ENCODE measurements at regions of chr10 and their contacts with region 1.

Region 1: GRCh38 chr10:22003079-22003913 is at the start of gene DNAJC1:
- DNase-seq: peak; percentile 99
- ATAC-seq: peak; percentile 94
- H3K4me3 Mint-ChIP-seq: peak within 1 kb of the TSS; percentile 98
- H3K27ac Mint-ChIP-seq: peak within 1 kb of the TSS; percentile 97
- H3K4me1 Mint-ChIP-seq: peaks cover 27% of the 10 kb centered on the region
- H3K27me3 Mint-ChIP-seq: peaks cover 12% of the 10 kb centered on the region
- total RNA-seq, gene DNAJC1: 22.3 to 23.0 TPM

Region 2: DNA sequence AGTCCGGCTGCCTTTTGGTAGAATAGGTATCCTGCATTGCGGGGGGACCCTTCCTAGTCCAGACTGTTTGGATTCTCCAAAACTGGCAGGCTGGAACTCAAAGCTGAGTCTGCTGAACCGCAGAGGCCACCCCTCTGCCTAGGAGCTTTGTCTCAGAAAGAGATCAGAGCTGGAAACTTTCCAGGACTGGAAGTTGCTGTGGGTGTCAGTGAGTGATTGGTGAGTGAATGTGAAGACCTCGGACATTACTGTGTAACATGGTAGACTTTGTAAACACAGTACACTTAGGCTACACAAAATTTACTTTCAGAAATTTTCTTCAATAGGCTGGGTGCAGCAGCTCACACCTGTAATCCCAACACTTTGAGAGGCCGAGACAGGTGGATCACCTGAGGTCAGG is 103.6 kb before region 1 on chr10:
- POLR2A ChIA-PET with region 1: no interaction called
- DNase-seq: no peak
- ATAC-seq: no peak
- H3K4me3 Mint-ChIP-seq: no peak overlapping the region
- H3K27ac Mint-ChIP-seq: no peak overlapping the region
- H3K4me1 Mint-ChIP-seq: peaks cover 1% of the 10 kb centered on the region
- H3K27me3 Mint-ChIP-seq: no peaks in the 10 kb centered on the region

Region 3: GRCh38 chr10:21943633-21944265 is 59.5 kb before region 1 on chr10:
- POLR2A ChIA-PET with region 1: no interaction called
- DNase-seq: no peak
- ATAC-seq: no peak
- H3K4me3 Mint-ChIP-seq: no peak overlapping the region
- H3K27ac Mint-ChIP-seq: no peak overlapping the region
- H3K4me1 Mint-ChIP-seq: peaks cover 6% of the 10 kb centered on the region
- H3K27me3 Mint-ChIP-seq: no peaks in the 10 kb centered on the region

Region 4: GRCh38 chr10:21975378-21975990 is 27.8 kb before region 1 on chr10:
- POLR2A ChIA-PET with region 1: no interaction called
- DNase-seq: no peak
- ATAC-seq: no peak
- H3K4me3 Mint-ChIP-seq: no peak overlapping the region
- H3K27ac Mint-ChIP-seq: no peak overlapping the region
- H3K4me1 Mint-ChIP-seq: peaks cover 3% of the 10 kb centered on the region
- H3K27me3 Mint-ChIP-seq: no peaks in the 10 kb centered on the region

Region 5: GRCh38 chr10:22017283-22018020 is 14.2 kb after region 1 on chr10:
- POLR2A ChIA-PET with region 1: no interaction called
- DNase-seq: no peak
- ATAC-seq: no peak
- H3K4me3 Mint-ChIP-seq: no peak overlapping the region
- H3K27ac Mint-ChIP-seq: no peak overlapping the region
- H3K4me1 Mint-ChIP-seq: peaks cover 3% of the 10 kb centered on the region
- H3K27me3 Mint-ChIP-seq: peaks cover 10% of the 10 kb centered on the region

Region 6: GRCh38 chr10:22228943-22229801 is 225.9 kb after region 1 on chr10:
- POLR2A ChIA-PET with region 1: interaction called, 10 read pairs
- DNase-seq: peak; percentile 88
- ATAC-seq: peak; percentile 78
- H3K4me3 Mint-ChIP-seq: peak overlapping the region; percentile 89
- H3K27ac Mint-ChIP-seq: peak overlapping the region; percentile 96
- H3K4me1 Mint-ChIP-seq: peaks cover 24% of the 10 kb centered on the region
- H3K27me3 Mint-ChIP-seq: peaks cover 13% of the 10 kb centered on the region